Activated B cell treated with CpG ODN at 0.5 μM for 24 hours (primary cell): ENCODE measurements at regions of chr5 and their contacts with region 1.

Region 1: GRCh38 chr5:76867827-76868693 is 18.2 kb downstream of the S100Z start:
- DNase-seq: peak; percentile 17
- ATAC-seq: peak; percentile 90
- H3K4me3 Mint-ChIP-seq: no peak overlapping the region
- H3K27ac Mint-ChIP-seq: no peak overlapping the region
- H3K4me1 Mint-ChIP-seq: peaks cover 3% of the 10 kb centered on the region
- H3K27me3 Mint-ChIP-seq: no peaks in the 10 kb centered on the region
- CTCF ChIP-seq: no peak

Region 2: DNA sequence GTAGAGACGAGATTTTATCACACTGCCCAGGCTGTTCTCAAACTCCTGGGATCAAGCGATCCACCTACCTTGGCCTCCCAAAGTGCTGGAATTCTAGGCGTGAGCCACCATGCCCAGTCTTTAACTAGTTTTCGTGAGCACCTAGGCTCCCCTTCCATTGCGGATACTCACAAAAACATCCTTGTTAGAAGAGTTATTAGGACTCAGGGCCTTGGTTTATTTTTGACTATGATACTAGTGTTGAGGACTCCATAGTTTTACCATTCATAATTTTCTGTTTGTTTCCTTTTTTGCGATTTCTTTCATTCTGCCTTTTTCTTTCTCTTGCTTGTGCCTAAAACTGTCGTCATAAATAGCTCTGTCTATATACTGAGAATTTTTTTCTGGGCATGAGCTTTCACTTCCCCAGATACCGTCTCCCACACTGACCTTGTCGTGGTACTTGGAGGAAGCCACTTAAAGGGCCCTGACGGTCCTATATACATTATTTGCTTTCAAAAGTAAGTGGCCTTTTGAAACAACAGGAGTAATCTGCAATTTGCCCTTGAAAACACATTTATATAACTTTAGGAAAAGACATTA is 147.0 kb before region 1 on chr5:
- CTCF ChIA-PET with region 1: no interaction called
- POLR2A ChIA-PET with region 1: no interaction called
- intact Hi-C with region 1: no loop called
- DNase-seq: no peak
- ATAC-seq: peak; percentile 50
- H3K4me3 Mint-ChIP-seq: no peak overlapping the region
- H3K27ac Mint-ChIP-seq: no peak overlapping the region
- H3K4me1 Mint-ChIP-seq: peaks cover 15% of the 10 kb centered on the region
- H3K27me3 Mint-ChIP-seq: peaks cover 24% of the 10 kb centered on the region
- CTCF ChIP-seq: no peak

Region 3: DNA sequence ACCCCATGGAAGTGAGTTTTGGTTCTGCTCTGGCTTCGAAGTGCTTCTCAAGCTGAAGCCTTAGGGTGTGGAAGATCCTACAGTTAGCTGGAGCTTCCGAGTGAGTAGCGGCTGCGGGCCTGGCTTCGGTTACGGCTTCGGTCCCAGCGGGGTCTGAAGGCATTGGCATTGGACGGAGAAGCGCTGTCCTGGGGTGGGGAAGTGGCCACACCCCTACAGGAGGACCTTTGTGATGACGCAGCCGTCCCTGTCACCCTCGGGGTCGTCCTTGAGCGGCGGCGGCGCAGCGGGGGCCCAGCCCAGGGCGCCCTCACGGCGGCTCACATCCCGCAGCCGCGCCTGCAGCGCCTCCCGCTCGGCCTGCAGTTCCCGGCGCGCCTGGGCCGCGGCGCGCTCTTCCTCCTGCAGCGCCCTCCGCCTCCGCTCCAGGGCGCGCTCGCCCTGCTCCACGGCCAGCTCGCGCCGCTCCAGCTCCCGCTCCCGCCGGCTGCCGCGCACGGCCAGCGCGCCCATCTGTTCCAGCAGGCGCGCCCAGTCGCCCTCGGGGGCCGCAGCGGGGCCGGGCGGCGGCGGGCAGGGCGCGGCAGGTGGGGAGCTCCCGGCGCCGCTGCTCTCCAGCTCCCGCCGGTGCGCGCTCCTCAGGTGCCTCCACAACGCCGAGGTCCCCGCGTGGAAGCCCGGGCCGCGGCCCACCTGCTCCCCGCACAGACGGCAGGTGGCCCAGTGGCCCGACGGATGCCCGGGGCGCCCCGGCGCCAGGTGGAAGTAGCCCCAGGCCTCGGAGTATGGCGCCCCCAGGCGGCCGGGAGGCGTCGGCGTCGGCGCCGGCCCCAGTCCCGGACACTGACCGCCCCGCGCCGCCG is 209.1 kb after region 1 on chr5:
- CTCF ChIA-PET with region 1: interaction called, 7 read pairs
- POLR2A ChIA-PET with region 1: no interaction called
- intact Hi-C with region 1: loop called (anchors 1 kb)
- DNase-seq: peak; percentile 57
- ATAC-seq: peak; percentile 72
- H3K4me3 Mint-ChIP-seq: peak overlapping the region; percentile 56
- H3K27ac Mint-ChIP-seq: no peak overlapping the region
- H3K4me1 Mint-ChIP-seq: peaks cover 7% of the 10 kb centered on the region
- H3K27me3 Mint-ChIP-seq: no peaks in the 10 kb centered on the region
- CTCF ChIP-seq: no peak

Region 4: DNA sequence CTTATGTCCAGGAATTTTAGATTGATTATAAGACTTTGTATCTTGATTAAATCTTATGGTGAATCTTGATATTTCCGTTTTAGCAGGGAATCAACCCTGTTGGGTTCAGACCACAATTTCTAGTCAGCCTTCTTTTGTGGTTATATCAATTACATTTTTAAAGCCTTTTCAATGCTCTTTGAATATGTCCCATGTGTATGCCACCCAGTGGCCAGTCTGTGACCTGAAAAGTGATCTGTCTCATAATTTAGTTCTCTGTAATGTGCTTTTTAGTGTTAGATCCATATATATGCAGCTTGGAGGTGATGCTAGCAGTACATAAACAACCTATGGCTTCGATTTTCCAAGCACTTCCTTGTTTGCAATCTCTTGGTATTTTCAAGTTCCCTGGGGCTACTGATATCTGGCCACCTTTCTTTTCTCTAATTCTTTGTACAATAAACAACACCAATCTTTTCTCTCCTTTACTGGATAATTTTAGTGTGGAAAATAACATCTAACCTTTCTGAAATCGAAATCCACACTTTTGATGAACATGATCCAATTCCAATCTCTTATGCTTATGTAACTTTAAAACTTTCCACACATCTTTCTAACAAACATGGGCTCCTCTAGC is 371.2 kb after region 1 on chr5:
- CTCF ChIA-PET with region 1: no interaction called
- POLR2A ChIA-PET with region 1: no interaction called
- intact Hi-C with region 1: loop called (anchors 1 kb)
- DNase-seq: no peak
- ATAC-seq: no peak
- H3K4me3 Mint-ChIP-seq: no peak overlapping the region
- H3K27ac Mint-ChIP-seq: no peak overlapping the region
- H3K4me1 Mint-ChIP-seq: no peaks in the 10 kb centered on the region
- H3K27me3 Mint-ChIP-seq: peaks cover 7% of the 10 kb centered on the region
- CTCF ChIP-seq: no peak

Region 5: GRCh38 chr5:77844623-77845323 is 976.7 kb after region 1 on chr5:
- CTCF ChIA-PET with region 1: no interaction called
- POLR2A ChIA-PET with region 1: no interaction called
- intact Hi-C with region 1: loop called (anchors 10 kb)
- DNase-seq: no peak
- ATAC-seq: peak; percentile 45
- H3K4me3 Mint-ChIP-seq: peak overlapping the region; percentile 83
- H3K27ac Mint-ChIP-seq: no peak overlapping the region
- H3K4me1 Mint-ChIP-seq: peaks cover 10% of the 10 kb centered on the region
- H3K27me3 Mint-ChIP-seq: peaks cover 25% of the 10 kb centered on the region
- CTCF ChIP-seq: no peak

Region 6: GRCh38 chr5:78269088-78269703 is 1401.1 kb after region 1 on chr5:
- CTCF ChIA-PET with region 1: no interaction called
- POLR2A ChIA-PET with region 1: no interaction called
- intact Hi-C with region 1: loop called (anchors 2 kb)
- DNase-seq: no peak
- ATAC-seq: peak; percentile 61
- H3K4me3 Mint-ChIP-seq: no peak overlapping the region
- H3K27ac Mint-ChIP-seq: no peak overlapping the region
- H3K4me1 Mint-ChIP-seq: peaks cover 21% of the 10 kb centered on the region
- H3K27me3 Mint-ChIP-seq: no peaks in the 10 kb centered on the region
- CTCF ChIP-seq: peak; percentile 36